Natural killer cell (primary cell): ENCODE measurements at regions of chr7 and their contacts with region 1.

Region 1: GRCh38 chr7:65981965-65982792 is at the start of gene GUSB:
- DNase-seq: peak; percentile 87 to 93
- ATAC-seq: peak; percentile 70 to 83 (median 82)
- H3K4me3 ChIP-seq: peak within 1 kb of the TSS; percentile 90
- H3K4me3 Mint-ChIP-seq: peak within 1 kb of the TSS; percentile 87
- H3K27ac ChIP-seq: peak within 1 kb of the TSS; percentile 75
- H3K27ac Mint-ChIP-seq: peak within 1 kb of the TSS; percentile 88 to 94
- H3K4me1 ChIP-seq: peaks cover 24% of the 10 kb centered on the region
- H3K4me1 Mint-ChIP-seq: peaks cover 6 to 10% of the 10 kb centered on the region in 2 donors
- H3K27me3 ChIP-seq: no peaks in the 10 kb centered on the region
- H3K27me3 Mint-ChIP-seq: no peaks in the 10 kb centered on the region
- CTCF ChIP-seq: no peak
- total RNA-seq, gene GUSB: 68.8 to 94.5 (median 85.7) TPM

Region 2: GRCh38 chr7:65750511-65751344 is 231.5 kb before region 1 on chr7:
- intact Hi-C with region 1: loop called (anchors 2 kb)
- DNase-seq: peak; percentile 86 to 90
- ATAC-seq: peak; percentile 96 to 99 (median 98)
- H3K4me3 ChIP-seq: peak overlapping the region; percentile 84
- H3K4me3 Mint-ChIP-seq: peak overlapping the region; percentile 92
- H3K27ac ChIP-seq: peak overlapping the region; percentile 68
- H3K27ac Mint-ChIP-seq: peak overlapping the region; percentile 82 to 91
- H3K4me1 ChIP-seq: peaks cover 15% of the 10 kb centered on the region
- H3K4me1 Mint-ChIP-seq: peaks cover 14 to 15% of the 10 kb centered on the region in 2 donors
- H3K27me3 ChIP-seq: no peaks in the 10 kb centered on the region
- H3K27me3 Mint-ChIP-seq: no peaks in the 10 kb centered on the region
- CTCF ChIP-seq: no peak

Region 3: GRCh38 chr7:66043681-66044497 is 61.7 kb after region 1 on chr7:
- intact Hi-C with region 1: no loop called
- DNase-seq: peak; percentile 26 to 48
- ATAC-seq: peak; percentile 75 to 81 (median 81)
- H3K4me3 ChIP-seq: peak overlapping the region; percentile 38
- H3K4me3 Mint-ChIP-seq: peak overlapping the region; percentile 87
- H3K27ac ChIP-seq: no peak overlapping the region
- H3K27ac Mint-ChIP-seq: peak overlapping the region in 1 of 2 donors; percentile 84
- H3K4me1 ChIP-seq: peaks cover 12% of the 10 kb centered on the region
- H3K4me1 Mint-ChIP-seq: peaks cover 9 to 10% of the 10 kb centered on the region in 2 donors
- H3K27me3 ChIP-seq: peaks cover 3% of the 10 kb centered on the region
- H3K27me3 Mint-ChIP-seq: peaks cover 0 to 8% of the 10 kb centered on the region in 2 donors
- CTCF ChIP-seq: no peak

Region 4: GRCh38 chr7:66493235-66494181 is 511.3 kb after region 1 on chr7:
- intact Hi-C with region 1: loop called (anchors 5 kb)
- DNase-seq: peak; percentile 94 to 99
- ATAC-seq: peak; percentile 92 to 98 (median 93)
- H3K4me3 ChIP-seq: peak overlapping the region; percentile 71
- H3K4me3 Mint-ChIP-seq: peak overlapping the region; percentile 90
- H3K27ac ChIP-seq: peak overlapping the region; percentile 92
- H3K27ac Mint-ChIP-seq: peak overlapping the region; percentile 98
- H3K4me1 ChIP-seq: peaks cover 17% of the 10 kb centered on the region
- H3K4me1 Mint-ChIP-seq: peaks cover 9 to 16% of the 10 kb centered on the region in 2 donors
- H3K27me3 ChIP-seq: no peaks in the 10 kb centered on the region
- H3K27me3 Mint-ChIP-seq: no peaks in the 10 kb centered on the region
- CTCF ChIP-seq: peak; percentile 27